Transverse colon (tissue), 4 donors: ENCODE measurements at regions of chr17 and their contacts with region 1.

Region 1: DNA sequence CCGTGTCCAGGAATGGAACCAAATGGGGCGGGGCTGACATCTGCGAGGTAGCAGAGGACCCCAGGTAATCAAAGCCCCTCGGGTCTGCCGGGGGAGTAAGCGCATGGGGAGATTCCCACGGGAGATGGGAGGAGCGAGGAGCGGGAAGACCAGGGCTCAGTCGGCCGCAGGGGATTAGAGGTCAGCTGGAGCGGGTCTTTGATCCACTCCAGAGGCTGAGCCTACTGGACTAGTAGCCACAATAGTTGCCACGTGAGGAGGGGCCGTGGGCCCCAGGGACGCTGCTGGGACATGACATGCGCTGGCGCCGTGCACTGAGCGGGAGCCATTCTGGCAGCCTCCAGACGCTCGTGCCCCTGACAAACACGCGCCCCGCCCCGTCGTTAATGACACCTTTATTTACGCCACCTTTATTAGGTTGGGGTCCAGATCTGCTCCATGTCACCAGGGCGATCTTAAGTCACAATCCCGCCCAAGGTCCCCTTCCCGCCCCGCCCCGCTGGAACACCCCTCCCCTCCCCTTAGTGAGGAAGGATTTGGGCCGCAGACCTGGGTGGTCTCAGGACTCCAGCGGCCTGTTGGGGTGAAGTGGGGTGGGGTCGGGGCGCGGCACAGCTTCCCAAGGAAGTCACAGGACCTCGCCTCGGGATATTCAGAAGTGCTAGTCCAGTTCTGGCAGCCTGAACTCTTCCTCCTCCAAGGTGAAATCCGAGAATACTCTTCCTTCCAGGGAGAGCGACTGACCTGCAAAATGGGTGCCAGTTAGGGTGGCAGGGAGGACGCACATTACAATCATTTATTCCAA is 15.0 kb downstream of the PPY start:
- DNase-seq: peak; percentile 37
- H3K4me3 ChIP-seq: peak overlapping the region in 3 of 4 donors; percentile 1 to 45 (median 19)
- H3K27ac ChIP-seq: peak overlapping the region in 2 of 4 donors; percentile 39 to 66
- H3K4me1 ChIP-seq: peaks cover 0 to 43% (median 31%) of the 10 kb centered on the region in 4 donors
- H3K27me3 ChIP-seq: peaks cover 24% of the 10 kb centered on the region
- CTCF ChIP-seq: no peak
- EP300 ChIP-seq: no peak
- POLR2A ChIP-seq: no peak

Region 2: DNA sequence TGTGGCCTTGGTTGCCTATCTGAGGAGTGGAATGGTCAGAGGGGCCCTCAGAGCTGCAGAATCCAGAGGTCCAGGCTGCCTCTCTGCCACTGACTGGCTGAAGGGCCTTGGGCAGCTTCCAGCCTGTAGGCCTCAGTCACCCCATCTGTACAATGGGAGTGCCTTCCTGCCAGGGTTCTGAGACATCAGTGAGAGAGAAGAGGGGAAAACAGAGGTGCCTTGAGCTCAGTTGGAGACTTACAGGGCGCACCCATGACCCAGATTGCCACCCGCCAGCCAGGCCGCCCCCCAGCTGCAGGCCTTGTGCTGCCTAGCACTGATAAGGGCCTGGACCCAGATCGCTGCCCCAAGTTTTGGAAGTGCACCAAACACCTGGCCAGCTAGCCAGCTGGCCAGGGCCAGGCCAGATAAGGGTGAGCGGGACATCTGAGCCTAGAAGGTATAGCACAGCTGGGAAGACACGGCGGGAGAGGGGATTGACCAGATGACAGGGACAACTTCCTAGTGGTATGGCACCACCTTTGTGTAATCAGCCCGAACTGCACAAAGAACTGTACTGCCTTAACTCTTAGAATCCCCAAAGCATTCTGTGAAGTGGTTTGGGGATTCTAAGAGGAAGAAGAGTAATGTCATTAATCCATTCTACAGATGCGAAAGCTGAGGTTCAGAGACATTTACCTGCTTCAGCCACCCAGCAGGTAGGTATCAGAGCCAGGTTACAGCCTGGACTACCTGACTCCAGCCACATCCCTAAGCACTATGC is 339.3 kb after region 1 on chr17:
- in situ Hi-C with region 1: no loop called
- intact Hi-C with region 1: loop called (anchors 5 kb)
- DNase-seq: no peak
- H3K4me3 ChIP-seq: no peak overlapping the region
- H3K27ac ChIP-seq: no peak overlapping the region
- H3K4me1 ChIP-seq: no peaks in the 10 kb centered on the region
- H3K27me3 ChIP-seq: no peaks in the 10 kb centered on the region
- CTCF ChIP-seq: no peak
- EP300 ChIP-seq: no peak
- POLR2A ChIP-seq: no peak